PC-9 (cell line): ENCODE measurements at regions of chr10 and their contacts with region 1.

Region 1: GRCh38 chr10:101840741-101841453 is 2.7 kb downstream of the KCNIP2 start:
- DNase-seq: peak; percentile 41 to 67
- H3K4me3 ChIP-seq: no peak overlapping the region
- H3K27ac ChIP-seq: no peak overlapping the region
- H3K4me1 ChIP-seq: no peaks in the 10 kb centered on the region
- H3K27me3 ChIP-seq: no peaks in the 10 kb centered on the region
- CTCF ChIP-seq: peak; percentile 85

Region 2: GRCh38 chr10:101803511-101803910 is 37.4 kb before region 1 on chr10:
- CTCF ChIA-PET with region 1: interaction called, 10 read pairs
- POLR2A ChIA-PET with region 1: no interaction called
- intact Hi-C with region 1: no loop called
- DNase-seq: no peak
- H3K4me3 ChIP-seq: no peak overlapping the region
- H3K27ac ChIP-seq: no peak overlapping the region
- H3K4me1 ChIP-seq: no peaks in the 10 kb centered on the region
- H3K27me3 ChIP-seq: no peaks in the 10 kb centered on the region
- CTCF ChIP-seq: no peak

Region 3: DNA sequence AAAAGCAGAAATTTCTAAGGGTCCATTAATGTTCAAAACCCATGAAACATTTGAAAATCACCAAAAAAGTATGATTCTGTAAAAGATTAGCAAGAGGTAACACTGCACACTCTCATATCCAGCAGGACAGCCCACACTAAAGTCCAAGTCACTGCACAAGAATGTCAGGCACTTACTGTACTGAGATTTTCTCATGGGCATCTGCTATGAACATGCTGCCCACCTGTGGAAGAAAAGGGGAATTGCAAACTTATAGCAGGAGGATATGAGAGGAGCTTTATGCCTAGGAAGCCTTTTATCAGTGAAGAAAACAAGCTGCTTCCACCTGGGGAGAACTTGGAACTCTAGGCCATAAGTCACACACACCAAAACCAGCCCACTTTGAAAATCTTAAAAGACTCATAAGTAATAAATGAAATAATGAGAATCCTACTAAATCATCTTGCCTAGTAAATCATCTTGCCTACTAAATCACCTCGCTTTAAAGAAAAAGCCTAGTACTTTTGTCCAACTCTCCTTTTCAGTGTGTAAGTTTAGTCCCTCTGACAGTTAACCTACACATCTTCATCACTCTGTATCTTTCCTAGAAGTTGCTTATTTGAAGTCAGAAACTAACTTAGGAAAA is 169.0 kb after region 1 on chr10:
- CTCF ChIA-PET with region 1: interaction called, 14 read pairs
- POLR2A ChIA-PET with region 1: no interaction called
- intact Hi-C with region 1: loop called (anchors 1 kb)
- DNase-seq: peak; percentile 40 to 76
- H3K4me3 ChIP-seq: no peak overlapping the region
- H3K27ac ChIP-seq: no peak overlapping the region
- H3K4me1 ChIP-seq: peaks cover 4% of the 10 kb centered on the region; the same call in 1 of the 2 replicates
- H3K27me3 ChIP-seq: no peaks in the 10 kb centered on the region
- CTCF ChIP-seq: peak; percentile 83

Region 4: GRCh38 chr10:102072673-102073527 is 232.0 kb after region 1 on chr10:
- CTCF ChIA-PET with region 1: interaction called, 12 read pairs
- POLR2A ChIA-PET with region 1: no interaction called
- intact Hi-C with region 1: loop called (anchors 1 kb)
- DNase-seq: peak in 1 of 2 experiments; percentile 72
- H3K4me3 ChIP-seq: no peak overlapping the region
- H3K27ac ChIP-seq: no peak overlapping the region
- H3K4me1 ChIP-seq: no peaks in the 10 kb centered on the region
- H3K27me3 ChIP-seq: no peaks in the 10 kb centered on the region
- CTCF ChIP-seq: peak; percentile 87

Region 5: DNA sequence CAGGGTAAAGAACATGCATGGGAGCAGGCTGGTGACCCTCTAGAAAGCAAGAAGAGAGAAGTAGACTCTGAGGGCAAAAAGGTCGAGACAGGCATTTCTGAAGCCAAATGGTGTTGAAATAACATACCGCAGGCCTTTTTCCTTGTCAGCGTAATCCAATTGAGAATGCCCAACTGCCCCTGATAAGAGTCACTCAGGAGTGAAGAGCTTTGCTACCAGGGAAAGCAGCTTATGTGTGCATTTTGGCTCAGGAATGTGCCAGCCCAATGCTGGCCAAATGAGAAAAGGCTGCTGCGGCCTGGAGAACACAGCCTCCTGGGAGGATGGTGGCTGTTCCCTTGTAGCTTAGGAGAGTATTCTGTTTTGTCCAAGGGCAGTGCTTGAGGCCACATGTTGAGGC is 493.2 kb after region 1 on chr10:
- CTCF ChIA-PET with region 1: interaction called, 12 read pairs
- POLR2A ChIA-PET with region 1: no interaction called
- intact Hi-C with region 1: no loop called
- DNase-seq: no peak
- H3K4me3 ChIP-seq: no peak overlapping the region
- H3K27ac ChIP-seq: no peak overlapping the region
- H3K4me1 ChIP-seq: no peaks in the 10 kb centered on the region
- H3K27me3 ChIP-seq: no peaks in the 10 kb centered on the region
- CTCF ChIP-seq: no peak

Region 6: GRCh38 chr10:102358712-102359382 is 518.0 kb after region 1 on chr10:
- CTCF ChIA-PET with region 1: interaction called, 19 read pairs
- POLR2A ChIA-PET with region 1: no interaction called
- intact Hi-C with region 1: no loop called
- DNase-seq: no peak
- H3K4me3 ChIP-seq: no peak overlapping the region
- H3K27ac ChIP-seq: no peak overlapping the region
- H3K4me1 ChIP-seq: no peaks in the 10 kb centered on the region
- H3K27me3 ChIP-seq: no peaks in the 10 kb centered on the region
- CTCF ChIP-seq: no peak